T-cell (primary cell): ENCODE measurements at regions of chr5 and their contacts with region 1.

Region 1: GRCh38 chr5:56838409-56839039 is 23.2 kb downstream of the MAP3K1 start:
- DNase-seq: peak in 2 of 35 experiments; percentile 11 to 76
- ATAC-seq: peak; percentile 53 to 72 (median 59)
- H3K4me3 ChIP-seq: no peak overlapping the region
- H3K4me3 Mint-ChIP-seq: peak overlapping the region; percentile 7 to 57 (median 53)
- H3K27ac ChIP-seq: peak overlapping the region; percentile 42
- H3K27ac Mint-ChIP-seq: peak overlapping the region; percentile 79 to 85
- H3K4me1 ChIP-seq: peaks cover 48 to 49% of the 10 kb centered on the region in 2 experiments
- H3K4me1 Mint-ChIP-seq: peaks cover 92 to 95% (median 94%) of the 10 kb centered on the region in 3 donors
- H3K27me3 ChIP-seq: no peaks in the 10 kb centered on the region
- H3K27me3 Mint-ChIP-seq: no peaks in the 10 kb centered on the region

Region 2: GRCh38 chr5:56050551-56051255 is 787.8 kb before region 1 on chr5:
- CTCF ChIA-PET with region 1: interaction called in 1 of 2 experiments, 12 read pairs
- POLR2A ChIA-PET with region 1: no interaction called
- DNase-seq: peak in 1 of 35 experiments; percentile 44
- ATAC-seq: peak; percentile 63 to 82 (median 75)
- H3K4me3 ChIP-seq: peak overlapping the region in 1 of 2 donors; percentile 49
- H3K4me3 Mint-ChIP-seq: peak overlapping the region; percentile 54 to 69 (median 62)
- H3K27ac ChIP-seq: peak overlapping the region; percentile 58
- H3K27ac Mint-ChIP-seq: peak overlapping the region; percentile 95 to 96
- H3K4me1 ChIP-seq: peaks cover 46 to 61% of the 10 kb centered on the region in 2 experiments
- H3K4me1 Mint-ChIP-seq: peaks cover 63 to 75% (median 67%) of the 10 kb centered on the region in 3 donors
- H3K27me3 ChIP-seq: no peaks in the 10 kb centered on the region
- H3K27me3 Mint-ChIP-seq: no peaks in the 10 kb centered on the region

Region 3: GRCh38 chr5:56264417-56265025 is 574.0 kb before region 1 on chr5:
- CTCF ChIA-PET with region 1: interaction called, 13 to 105 read pairs
- POLR2A ChIA-PET with region 1: interaction called in 1 of 2 experiments, 7 read pairs
- DNase-seq: peak in 9 of 35 experiments; percentile 3 to 49 (median 7)
- ATAC-seq: peak in 1 of 4 experiments; percentile 27
- H3K4me3 ChIP-seq: no peak overlapping the region
- H3K4me3 Mint-ChIP-seq: no peak overlapping the region
- H3K27ac ChIP-seq: no peak overlapping the region
- H3K27ac Mint-ChIP-seq: no peak overlapping the region
- H3K4me1 ChIP-seq: no peaks in the 10 kb centered on the region
- H3K4me1 Mint-ChIP-seq: peaks cover 2 to 3% (median 2%) of the 10 kb centered on the region in 3 donors
- H3K27me3 ChIP-seq: peaks cover 0 to 3% of the 10 kb centered on the region in 2 experiments
- H3K27me3 Mint-ChIP-seq: no peaks in the 10 kb centered on the region

Region 4: GRCh38 chr5:56480705-56481427 is 357.7 kb before region 1 on chr5:
- CTCF ChIA-PET with region 1: interaction called in 1 of 2 experiments, 11 read pairs
- POLR2A ChIA-PET with region 1: no interaction called
- DNase-seq: peak in 23 of 35 experiments; percentile 8 to 56 (median 28)
- ATAC-seq: peak; percentile 7 to 19 (median 10)
- H3K4me3 ChIP-seq: peak overlapping the region; percentile 53 to 65
- H3K4me3 Mint-ChIP-seq: peak overlapping the region; percentile 82 to 93 (median 86)
- H3K27ac ChIP-seq: peak overlapping the region; percentile 82
- H3K27ac Mint-ChIP-seq: peak overlapping the region; percentile 96 to 97
- H3K4me1 ChIP-seq: peaks cover 28 to 50% of the 10 kb centered on the region in 2 experiments
- H3K4me1 Mint-ChIP-seq: peaks cover 33 to 61% (median 54%) of the 10 kb centered on the region in 3 donors
- H3K27me3 ChIP-seq: peaks cover 0 to 16% of the 10 kb centered on the region in 2 experiments
- H3K27me3 Mint-ChIP-seq: no peaks in the 10 kb centered on the region

Region 5: DNA sequence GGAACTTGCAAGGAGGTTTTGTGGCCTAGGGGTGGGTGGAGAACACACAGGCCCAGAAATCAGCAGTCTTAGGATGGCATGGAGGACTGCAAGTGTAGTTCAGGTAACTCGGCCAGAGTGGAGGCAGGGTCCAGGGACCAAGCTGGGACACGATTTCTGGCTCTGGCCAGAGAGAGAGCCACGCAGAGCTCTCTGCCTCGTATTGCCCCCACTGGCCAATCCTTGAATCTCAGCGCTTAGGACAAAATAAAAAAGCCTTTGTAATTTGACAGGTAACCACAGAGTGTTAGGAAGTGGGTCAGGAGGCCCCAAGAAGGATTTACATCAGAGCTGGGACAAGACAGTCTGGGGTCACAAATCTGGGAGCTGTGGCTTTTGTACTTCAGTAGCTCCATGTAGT is 11.5 kb before region 1 on chr5:
- CTCF ChIA-PET with region 1: interaction called, 4 to 13 read pairs
- POLR2A ChIA-PET with region 1: interaction called in 1 of 2 experiments, 5 read pairs
- DNase-seq: peak in 2 of 35 experiments; percentile 18 to 41
- ATAC-seq: peak; percentile 7 to 35 (median 18)
- H3K4me3 ChIP-seq: no peak overlapping the region
- H3K4me3 Mint-ChIP-seq: peak overlapping the region; percentile 34 to 79 (median 63)
- H3K27ac ChIP-seq: peak overlapping the region; percentile 24
- H3K27ac Mint-ChIP-seq: peak overlapping the region; percentile 82 to 86
- H3K4me1 ChIP-seq: peaks cover 61 to 65% of the 10 kb centered on the region in 2 experiments
- H3K4me1 Mint-ChIP-seq: peaks cover 95 to 97% (median 95%) of the 10 kb centered on the region in 3 donors
- H3K27me3 ChIP-seq: no peaks in the 10 kb centered on the region
- H3K27me3 Mint-ChIP-seq: no peaks in the 10 kb centered on the region